PC-3 (cell line): ENCODE measurements at regions of chr3 and their contacts with region 1.

Region 1: GRCh38 chr3:57864853-57865252 is 108.7 kb downstream of the SLMAP start:
- DNase-seq: peak; percentile 41
- ATAC-seq: no peak; the same call in 1 of the 2 replicates
- H3K4me3 ChIP-seq: no peak overlapping the region
- H3K27ac ChIP-seq: no peak overlapping the region
- H3K4me1 ChIP-seq: no peaks in the 10 kb centered on the region
- H3K27me3 ChIP-seq: no peaks in the 10 kb centered on the region
- CTCF ChIP-seq: peak; percentile 58

Region 2: DNA sequence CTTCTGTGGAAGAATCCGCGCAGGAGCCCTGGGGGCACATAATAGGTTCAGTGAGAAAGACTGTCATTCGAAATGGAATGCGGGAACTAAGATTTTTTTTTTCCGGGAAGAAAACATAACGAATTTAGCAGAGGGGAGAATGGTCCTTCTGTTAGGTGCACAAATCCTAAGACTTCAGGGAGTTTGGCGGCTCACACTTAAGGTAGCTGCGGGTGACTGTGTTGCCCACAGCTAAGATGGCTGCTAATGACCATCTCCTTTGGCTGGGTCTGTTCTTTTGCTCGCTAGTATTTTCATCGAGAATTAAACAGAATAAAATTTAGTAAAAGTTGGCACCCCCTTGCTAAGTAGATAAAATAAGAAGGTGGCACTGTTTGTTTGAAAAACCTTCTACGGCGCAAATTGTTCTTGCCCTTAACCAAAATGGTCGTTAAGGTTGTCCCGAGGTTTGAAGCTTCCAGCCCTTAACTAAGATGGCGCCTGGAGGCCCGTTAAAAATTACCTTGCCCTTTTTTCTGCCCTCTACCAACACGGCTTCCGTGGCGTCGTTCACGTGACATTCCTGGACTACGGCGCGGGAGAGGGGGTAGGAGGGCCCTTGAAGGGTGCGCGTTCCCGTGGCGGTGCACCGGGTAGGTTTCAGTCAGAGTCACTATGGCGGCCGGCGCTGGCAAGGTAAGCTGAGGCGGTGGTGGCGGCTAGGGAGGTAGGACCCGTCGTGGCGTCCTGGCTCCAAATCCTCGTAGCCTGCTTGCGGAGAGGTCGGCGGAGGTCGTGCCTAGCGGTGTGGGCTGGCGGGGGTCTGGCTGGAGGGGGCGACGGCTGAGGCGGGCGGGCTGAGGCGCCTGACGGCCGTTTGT is 109.0 kb before region 1 on chr3 and contains the start of gene SLMAP:
- CTCF ChIA-PET with region 1: no interaction called
- POLR2A ChIA-PET with region 1: no interaction called
- intact Hi-C with region 1: no loop called
- DNase-seq: peak; percentile 98
- ATAC-seq: peak; percentile 72
- H3K4me3 ChIP-seq: peak within 1 kb of the TSS; percentile 90
- H3K27ac ChIP-seq: peak within 1 kb of the TSS; percentile 45
- H3K4me1 ChIP-seq: peaks cover 49% of the 10 kb centered on the region
- H3K27me3 ChIP-seq: no peaks in the 10 kb centered on the region
- CTCF ChIP-seq: no peak
- total RNA-seq, gene SLMAP: 55.2 and 60.0 TPM in 2 replicates

Region 3: GRCh38 chr3:57910988-57911387 is 46.1 kb after region 1 on chr3:
- CTCF ChIA-PET with region 1: no interaction called
- POLR2A ChIA-PET with region 1: no interaction called
- intact Hi-C with region 1: loop called (anchors 2 kb)
- DNase-seq: peak; percentile 53
- ATAC-seq: peak; percentile 82
- H3K4me3 ChIP-seq: no peak overlapping the region
- H3K27ac ChIP-seq: no peak overlapping the region
- H3K4me1 ChIP-seq: peaks cover 13% of the 10 kb centered on the region
- H3K27me3 ChIP-seq: no peaks in the 10 kb centered on the region
- CTCF ChIP-seq: peak; percentile 83

Region 4: DNA sequence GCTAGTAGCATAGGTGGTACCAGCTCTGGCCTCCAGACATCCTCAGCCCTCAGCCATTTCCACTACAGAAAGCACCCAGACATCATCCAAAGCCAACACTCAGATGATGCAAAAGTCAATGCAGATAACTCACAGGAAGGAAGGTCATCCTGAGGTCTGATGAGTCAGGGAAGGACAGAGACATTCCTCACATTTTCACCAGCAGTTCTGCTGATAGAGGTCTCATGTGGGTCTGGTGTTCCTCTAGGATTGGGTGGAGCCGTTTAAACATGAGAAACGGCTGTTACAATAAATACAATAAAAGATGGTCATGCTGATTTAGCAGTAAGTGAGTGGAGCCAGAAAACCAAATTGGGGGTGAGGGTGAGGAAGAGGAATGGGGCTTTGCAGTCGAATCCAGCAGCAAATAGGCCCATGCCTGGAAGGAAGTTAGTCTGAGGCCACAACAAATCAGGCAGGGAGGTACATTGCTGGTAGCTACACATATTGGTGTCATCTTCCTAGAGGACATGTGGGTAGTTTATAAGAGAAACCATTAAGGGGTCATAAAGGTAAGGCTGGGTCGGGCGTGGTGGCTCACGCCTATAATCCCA is 110.0 kb after region 1 on chr3:
- CTCF ChIA-PET with region 1: no interaction called
- POLR2A ChIA-PET with region 1: no interaction called
- intact Hi-C with region 1: no loop called
- DNase-seq: peak; percentile 98
- ATAC-seq: peak; percentile 36
- H3K4me3 ChIP-seq: no peak overlapping the region
- H3K27ac ChIP-seq: peak overlapping the region; percentile 95
- H3K4me1 ChIP-seq: peaks cover 82% of the 10 kb centered on the region
- H3K27me3 ChIP-seq: no peaks in the 10 kb centered on the region
- CTCF ChIP-seq: no peak